PC-9 (cell line): ENCODE measurements at regions of chr7 and their contacts with region 1.

Region 1: DNA sequence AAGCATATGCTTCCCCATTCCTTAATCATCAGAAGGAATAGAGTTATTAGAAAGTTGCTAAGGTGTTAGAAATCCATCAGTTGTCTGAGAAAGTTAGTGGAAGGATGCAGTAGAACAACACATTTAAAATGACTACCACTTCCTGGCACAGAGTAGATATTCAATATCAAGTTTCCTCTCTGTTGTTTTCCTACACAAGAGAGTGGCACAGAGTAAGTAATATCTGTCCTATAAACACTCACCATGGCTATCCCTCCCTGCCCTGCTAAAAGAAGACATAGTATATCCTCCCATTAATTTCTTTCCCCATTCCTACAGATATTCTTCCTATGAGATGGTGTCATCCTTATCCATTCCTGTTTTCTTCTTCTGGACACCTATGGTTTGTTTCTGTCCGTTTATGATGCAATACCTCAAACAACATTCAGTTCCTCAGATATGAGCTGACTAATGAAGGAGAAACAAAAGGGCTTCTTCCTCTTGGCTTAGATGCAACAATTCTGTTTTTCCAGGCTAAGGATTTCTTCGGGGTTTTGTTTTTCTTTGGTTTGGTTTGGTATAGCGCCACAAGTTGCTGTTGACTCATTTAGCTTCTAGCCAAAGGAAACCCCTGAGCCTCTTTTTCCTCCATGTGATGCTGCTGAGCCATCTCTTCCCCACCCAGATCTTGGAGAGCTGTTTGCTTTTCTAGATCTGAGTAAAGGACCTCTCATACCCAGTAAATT is 32.9 kb upstream of the BPGM start:
- DNase-seq: peak; percentile 61 to 95
- H3K4me3 ChIP-seq: no peak overlapping the region; the same call in 1 of the 2 replicates
- H3K27ac ChIP-seq: peak overlapping the region; percentile 86
- H3K4me1 ChIP-seq: peaks cover 28% of the 10 kb centered on the region
- H3K27me3 ChIP-seq: no peaks in the 10 kb centered on the region
- CTCF ChIP-seq: no peak

Region 2: DNA sequence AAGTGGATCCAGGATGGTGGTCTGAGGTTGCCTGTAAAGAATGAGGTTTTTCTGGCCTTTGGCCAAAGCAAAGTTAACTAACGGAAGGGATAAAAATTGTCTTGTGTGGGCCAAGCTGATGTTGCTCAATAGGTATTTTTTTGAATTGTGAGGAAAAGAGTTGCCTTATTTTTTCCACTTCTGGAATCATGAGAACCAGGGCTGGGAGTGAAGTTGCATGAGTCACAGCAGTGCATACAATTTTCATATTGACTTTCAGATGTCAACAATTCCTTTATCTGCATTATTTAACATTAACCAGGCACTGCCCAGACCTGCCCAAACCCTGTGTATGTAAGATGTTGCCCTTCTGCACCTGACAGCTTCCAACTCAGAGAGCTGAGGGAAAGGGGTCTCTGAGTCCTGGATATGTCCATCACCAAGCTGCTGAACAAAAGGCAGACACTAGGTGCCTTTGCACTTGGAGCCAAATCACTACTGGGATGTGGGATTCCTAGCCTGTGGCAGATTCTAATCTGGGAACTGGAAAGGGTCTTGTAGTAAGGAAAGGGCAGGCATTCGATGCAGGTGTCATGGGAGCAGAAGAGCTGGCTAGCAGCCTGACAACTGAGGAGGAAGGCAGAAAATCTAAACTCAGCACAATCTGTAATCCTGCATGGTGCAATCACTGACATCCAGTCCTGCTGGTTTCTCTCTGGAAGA is 244.8 kb before region 1 on chr7:
- CTCF ChIA-PET with region 1: no interaction called
- POLR2A ChIA-PET with region 1: no interaction called
- intact Hi-C with region 1: loop called (anchors 5 kb)
- DNase-seq: peak in 1 of 2 experiments; percentile 80
- H3K4me3 ChIP-seq: no peak overlapping the region
- H3K27ac ChIP-seq: peak overlapping the region; percentile 57
- H3K4me1 ChIP-seq: peaks cover 55% of the 10 kb centered on the region
- H3K27me3 ChIP-seq: no peaks in the 10 kb centered on the region
- CTCF ChIP-seq: no peak

Region 3: DNA sequence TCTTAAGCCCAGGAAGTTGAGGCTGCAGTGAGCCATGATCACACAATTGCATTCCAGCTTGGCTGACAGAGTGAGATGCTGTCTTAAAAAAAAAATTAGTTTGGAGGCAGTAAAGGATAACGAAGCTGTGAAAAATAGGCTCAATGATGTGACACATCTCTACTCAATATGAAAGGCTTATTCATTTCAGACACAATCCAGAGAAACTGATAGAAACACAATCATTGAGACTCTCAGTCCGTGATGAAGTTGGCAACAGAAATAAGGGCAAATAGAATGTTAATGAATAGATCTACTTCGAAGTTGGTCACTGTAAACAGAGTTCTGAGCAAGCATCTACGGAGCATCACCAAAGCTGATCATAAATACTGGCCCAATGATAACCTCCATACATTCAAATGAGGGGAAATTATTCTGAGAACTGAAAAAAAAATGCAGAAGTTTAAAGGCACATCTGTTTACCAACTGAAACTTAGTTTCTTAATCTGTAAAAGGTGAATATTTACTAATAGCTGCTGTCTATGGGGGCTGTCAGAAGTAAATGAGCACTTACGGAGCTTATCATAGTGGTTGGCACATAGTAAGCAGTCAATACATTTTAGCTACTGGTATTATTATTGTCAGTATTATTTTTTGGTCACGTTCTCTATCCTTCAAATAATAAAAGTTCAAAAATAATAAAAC is 225.3 kb before region 1 on chr7:
- CTCF ChIA-PET with region 1: no interaction called
- POLR2A ChIA-PET with region 1: no interaction called
- intact Hi-C with region 1: no loop called
- DNase-seq: no peak
- H3K4me3 ChIP-seq: no peak overlapping the region
- H3K27ac ChIP-seq: no peak overlapping the region
- H3K4me1 ChIP-seq: no peaks in the 10 kb centered on the region
- H3K27me3 ChIP-seq: no peaks in the 10 kb centered on the region
- CTCF ChIP-seq: no peak

Region 4: GRCh38 chr7:134660961-134661376 is 47.2 kb after region 1 on chr7:
- CTCF ChIA-PET with region 1: no interaction called
- POLR2A ChIA-PET with region 1: interaction called, 10 read pairs
- intact Hi-C with region 1: no loop called
- DNase-seq: no peak
- H3K4me3 ChIP-seq: no peak overlapping the region
- H3K27ac ChIP-seq: no peak overlapping the region
- H3K4me1 ChIP-seq: no peaks in the 10 kb centered on the region
- H3K27me3 ChIP-seq: no peaks in the 10 kb centered on the region
- CTCF ChIP-seq: no peak